Left ventricle myocardium superior (tissue), 1 donor: ENCODE measurements at regions of chr2 and their contacts with region 1.

Region 1: GRCh38 chr2:159118115-159118858 is 149.8 kb downstream of the TANC1 start:
- DNase-seq: peak; percentile 91
- ATAC-seq: peak; percentile 85

Region 2: DNA sequence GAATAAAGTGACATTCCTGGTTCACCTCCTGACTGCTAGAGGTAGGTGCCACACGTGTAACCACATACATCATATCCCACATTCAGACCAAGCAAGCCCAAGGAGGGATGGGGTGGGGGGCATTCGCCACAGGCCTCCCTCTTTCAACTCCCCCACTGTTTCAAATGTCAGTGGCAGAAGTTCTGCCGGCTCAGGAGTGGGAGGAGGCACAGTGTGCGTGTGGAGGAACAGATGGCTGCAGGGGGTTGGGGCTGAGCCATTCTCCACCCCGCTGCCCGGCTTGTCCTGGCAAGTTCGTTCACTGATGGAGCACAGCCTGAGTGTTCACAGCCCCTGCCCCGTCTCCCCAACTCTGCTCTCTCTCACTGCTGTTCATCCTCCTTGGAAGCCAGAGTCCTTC is 225.3 kb before region 1 on chr2:
- intact Hi-C with region 1: loop called (anchors 5 kb)
- DNase-seq: no peak
- ATAC-seq: peak; percentile 32

Region 3: GRCh38 chr2:158968396-158969161 is 149.7 kb before region 1 on chr2 and contains the start of gene TANC1:
- intact Hi-C with region 1: loop called (anchors 10 kb)
- DNase-seq: peak; percentile 98
- ATAC-seq: peak; percentile 96
- total RNA-seq, gene TANC1: 62.7 TPM